ENCODE measurements at regions of chr1 and their contacts with region 1.

Region 1: DNA sequence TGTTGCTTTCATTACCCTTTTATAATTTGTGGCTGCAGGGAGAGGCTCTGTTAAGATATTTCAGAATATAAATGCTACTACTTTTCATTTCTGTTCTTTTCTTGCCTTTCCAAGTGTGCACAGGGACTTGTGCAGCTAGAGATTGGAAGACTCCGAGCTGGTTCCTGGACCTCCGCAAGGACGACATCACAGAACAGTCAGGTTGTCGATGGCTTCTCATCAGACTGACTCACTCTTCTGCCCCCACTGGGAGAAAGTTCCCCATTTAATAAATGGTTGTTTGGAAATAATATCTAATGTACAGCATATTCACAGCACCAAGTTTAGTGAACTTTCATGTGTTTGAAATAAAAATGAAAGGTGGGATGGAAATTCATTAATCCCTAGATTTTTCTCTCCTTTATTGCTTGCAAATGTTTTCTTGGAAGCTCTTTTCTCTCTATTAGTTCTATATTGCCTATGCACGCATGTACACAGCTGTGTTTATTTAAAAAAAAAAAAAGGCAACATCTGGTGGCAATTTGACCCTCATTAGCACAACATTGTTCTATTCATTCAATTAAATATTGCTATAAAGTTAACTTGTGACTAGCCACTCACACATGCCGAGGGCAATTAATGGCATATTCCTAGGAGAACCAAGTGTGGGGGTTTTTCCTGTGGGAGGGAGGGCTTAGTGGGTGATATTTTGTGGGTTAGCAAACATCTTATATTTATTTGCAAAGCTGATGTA is 77.5 kb upstream of the L1TD1 start:
- DNase-seq: no peak
- ATAC-seq: no peak
- H3K4me3 Mint-ChIP-seq: no peak overlapping the region
- H3K27ac Mint-ChIP-seq: no peak overlapping the region
- H3K4me1 Mint-ChIP-seq: peaks cover 1% of the 10 kb centered on the region
- H3K27me3 Mint-ChIP-seq: no peaks in the 10 kb centered on the region

Region 2: GRCh38 chr1:62131093-62131725 is 14.0 kb after region 1 on chr1:
- CTCF ChIA-PET with region 1: interaction called, 11 read pairs
- DNase-seq: peak; percentile 57
- ATAC-seq: peak; percentile 80
- H3K4me3 Mint-ChIP-seq: no peak overlapping the region
- H3K27ac Mint-ChIP-seq: no peak overlapping the region
- H3K4me1 Mint-ChIP-seq: no peaks in the 10 kb centered on the region
- H3K27me3 Mint-ChIP-seq: no peaks in the 10 kb centered on the region

Measured in activated CD8-positive, alpha-beta memory T cell treated with anti-CD3 and anti-CD28 coated beads, Interleukin-2, amount 10 ng/mL, durations not matched to agents 7 days and 5 days (primary cell).